Activated CD4-positive, alpha-beta T cell treated with anti-CD3 and anti-CD28 coated beads for 36 hours (primary cell): ENCODE measurements at regions of chr5 and their contacts with region 1.

Region 1: GRCh38 chr5:180494060-180494509 is at the start of gene CNOT6:
- DNase-seq: peak; percentile 96
- ATAC-seq: peak; percentile 93
- H3K4me3 Mint-ChIP-seq: peak within 1 kb of the TSS; percentile 78
- H3K27ac Mint-ChIP-seq: peak within 1 kb of the TSS; percentile 87
- H3K4me1 Mint-ChIP-seq: peaks cover 32% of the 10 kb centered on the region
- H3K27me3 Mint-ChIP-seq: no peaks in the 10 kb centered on the region
- total RNA-seq, gene CNOT6: 34.4 to 43.2 TPM

Region 2: DNA sequence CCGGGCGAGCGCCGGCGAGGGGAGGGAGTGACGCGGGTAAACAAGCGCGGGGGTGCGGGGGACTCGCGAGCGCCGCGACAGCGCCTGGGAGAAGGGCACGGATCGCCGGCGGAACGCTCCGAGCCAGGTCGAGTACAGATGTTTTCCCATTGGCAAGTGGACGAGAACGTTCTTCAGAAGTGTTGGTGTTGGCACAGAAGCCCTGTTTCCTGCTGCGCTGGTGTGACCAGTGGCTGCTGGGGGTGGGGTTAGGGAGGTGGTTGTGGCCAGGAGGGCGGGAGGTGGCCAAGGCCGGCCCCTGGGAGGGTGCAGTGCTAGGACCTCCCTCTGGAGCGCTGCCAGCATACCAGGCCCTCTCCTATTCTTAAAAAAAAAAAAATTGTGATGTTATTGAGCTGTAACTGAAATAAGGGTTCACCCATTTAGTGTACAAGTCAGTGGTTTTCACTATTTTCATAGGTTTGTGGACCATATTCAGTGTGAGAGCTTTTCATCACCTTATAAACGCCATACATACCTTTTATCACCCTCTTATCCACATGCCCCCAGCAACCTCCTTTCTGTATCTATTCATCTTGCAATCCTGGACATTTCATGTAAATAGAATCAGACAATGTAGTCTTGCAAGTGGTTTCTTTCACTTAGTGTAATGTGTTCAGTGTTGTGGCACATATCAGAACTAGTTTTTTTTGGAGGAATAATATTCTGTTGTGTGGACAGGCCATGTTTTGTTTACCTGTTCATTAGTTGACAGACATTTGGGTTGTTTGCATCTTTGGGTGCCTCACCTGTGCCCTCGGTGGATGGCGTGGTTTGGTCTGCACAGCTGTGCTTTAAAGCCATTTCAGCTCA is 672.3 kb before region 1 on chr5:
- CTCF ChIA-PET with region 1: no interaction called
- POLR2A ChIA-PET with region 1: no interaction called
- intact Hi-C with region 1: loop called in 1 of 2 experiments (anchors 2 kb)
- DNase-seq: peak; percentile 92
- ATAC-seq: peak; percentile 71
- H3K4me3 Mint-ChIP-seq: peak overlapping the region; percentile 92
- H3K27ac Mint-ChIP-seq: peak overlapping the region; percentile 90
- H3K4me1 Mint-ChIP-seq: peaks cover 38% of the 10 kb centered on the region
- H3K27me3 Mint-ChIP-seq: peaks cover 2% of the 10 kb centered on the region

Region 3: GRCh38 chr5:180353048-180353979 is 140.8 kb before region 1 on chr5 and contains the start of gene GFPT2:
- CTCF ChIA-PET with region 1: no interaction called
- POLR2A ChIA-PET with region 1: no interaction called
- intact Hi-C with region 1: loop called in 1 of 2 experiments (anchors 1 kb)
- DNase-seq: peak; percentile 84
- ATAC-seq: peak; percentile 92
- H3K4me3 Mint-ChIP-seq: peak within 1 kb of the TSS; percentile 55
- H3K27ac Mint-ChIP-seq: no peak within 1 kb of the TSS
- H3K4me1 Mint-ChIP-seq: peaks cover 5% of the 10 kb centered on the region
- H3K27me3 Mint-ChIP-seq: peaks cover 35% of the 10 kb centered on the region
- total RNA-seq, gene GFPT2: 0.16 TPM

Region 4: GRCh38 chr5:180605554-180606214 is 111.6 kb after region 1 on chr5:
- CTCF ChIA-PET with region 1: interaction called, 3 read pairs
- POLR2A ChIA-PET with region 1: no interaction called
- intact Hi-C with region 1: loop called (anchors 1 to 5 kb)
- DNase-seq: peak; percentile 85
- ATAC-seq: peak; percentile 74
- H3K4me3 Mint-ChIP-seq: no peak overlapping the region
- H3K27ac Mint-ChIP-seq: no peak overlapping the region
- H3K4me1 Mint-ChIP-seq: no peaks in the 10 kb centered on the region
- H3K27me3 Mint-ChIP-seq: no peaks in the 10 kb centered on the region

Region 5: GRCh38 chr5:180755601-180756000 is 261.5 kb after region 1 on chr5:
- CTCF ChIA-PET with region 1: no interaction called
- POLR2A ChIA-PET with region 1: no interaction called
- intact Hi-C with region 1: no loop called
- DNase-seq: no peak
- ATAC-seq: no peak
- H3K4me3 Mint-ChIP-seq: no peak overlapping the region
- H3K27ac Mint-ChIP-seq: no peak overlapping the region
- H3K4me1 Mint-ChIP-seq: no peaks in the 10 kb centered on the region
- H3K27me3 Mint-ChIP-seq: peaks cover 14% of the 10 kb centered on the region

Region 6: DNA sequence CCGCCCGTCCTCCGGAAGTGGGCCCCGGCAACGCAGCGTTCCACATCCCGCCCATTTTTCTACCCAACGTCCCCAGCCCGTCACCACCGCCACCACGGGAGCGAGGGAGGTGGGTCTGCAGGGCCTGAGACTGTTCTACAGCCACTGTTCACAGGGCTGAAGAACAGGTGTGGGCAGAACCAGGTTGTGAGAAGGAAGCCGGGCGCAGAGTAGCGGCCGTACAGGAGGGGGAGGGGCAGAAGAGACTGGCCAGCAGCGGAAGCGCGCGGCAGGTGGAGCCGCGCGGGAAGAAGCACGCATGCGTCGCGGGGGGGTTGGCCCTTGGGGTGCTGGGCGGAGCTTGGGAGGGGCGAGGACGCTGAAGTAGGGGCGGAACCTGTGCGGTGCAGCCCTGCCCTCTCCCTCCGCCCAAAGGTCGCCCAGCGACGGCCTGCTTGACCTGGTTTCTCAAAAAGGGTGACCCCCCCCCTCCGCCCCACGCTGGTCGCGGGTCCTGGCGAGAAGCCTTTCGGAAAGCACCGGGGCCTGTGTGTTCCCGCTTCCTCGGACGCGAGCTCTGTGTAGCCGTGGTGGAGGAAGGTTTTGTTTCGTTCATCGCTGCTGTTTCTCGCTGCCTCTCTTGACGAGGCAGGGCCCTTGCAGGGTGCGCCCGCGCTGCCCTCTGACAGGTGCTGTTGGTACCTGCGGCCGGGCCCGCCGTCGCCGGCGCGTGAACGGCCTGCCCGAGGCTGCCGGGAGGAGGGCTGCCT is 316.3 kb after region 1 on chr5:
- CTCF ChIA-PET with region 1: no interaction called
- POLR2A ChIA-PET with region 1: no interaction called
- intact Hi-C with region 1: loop called in 1 of 2 experiments (anchors 1 kb)
- DNase-seq: peak; percentile 98
- ATAC-seq: peak; percentile 79
- H3K4me3 Mint-ChIP-seq: peak overlapping the region; percentile 91
- H3K27ac Mint-ChIP-seq: peak overlapping the region; percentile 97
- H3K4me1 Mint-ChIP-seq: peaks cover 72% of the 10 kb centered on the region
- H3K27me3 Mint-ChIP-seq: no peaks in the 10 kb centered on the region